CD4-positive, alpha-beta T cell (primary cell): ENCODE measurements at regions of chr15 and their contacts with region 1.

Region 1: DNA sequence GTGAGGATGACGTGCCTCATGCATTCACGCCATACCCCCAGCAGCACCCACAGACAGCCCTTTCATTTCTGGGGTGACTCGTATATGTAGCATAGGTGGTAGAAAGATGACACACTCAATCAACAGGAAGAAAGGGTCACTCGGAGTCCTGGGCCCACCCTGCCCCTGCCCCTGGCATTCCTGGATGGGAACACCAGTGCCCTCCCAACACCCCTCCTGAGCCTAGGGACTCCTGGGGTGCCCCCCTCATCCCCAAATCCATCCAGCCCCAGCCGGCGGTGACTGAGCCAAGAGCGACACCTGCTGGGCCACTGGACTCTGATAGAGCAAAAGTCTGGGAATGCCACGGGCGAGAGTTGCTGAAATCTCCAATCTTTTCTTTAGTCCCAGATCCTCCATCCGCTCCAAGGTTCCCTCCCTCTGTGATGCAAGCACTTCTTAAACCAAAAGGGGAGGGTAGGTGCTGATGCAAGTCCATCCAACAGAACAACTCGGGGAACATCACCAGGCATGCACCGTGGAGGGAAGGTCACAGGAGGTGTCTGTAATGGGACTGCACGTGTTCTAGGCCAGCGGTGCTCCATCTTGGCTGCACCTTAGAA is 31.1 kb downstream of the ACAN start:
- DNase-seq: peak in 11 of 14 experiments; percentile 5 to 45 (median 23)
- ATAC-seq: no peak
- H3K4me3 ChIP-seq: no peak overlapping the region
- H3K4me3 Mint-ChIP-seq: no peak overlapping the region
- H3K27ac ChIP-seq: no peak overlapping the region
- H3K27ac Mint-ChIP-seq: no peak overlapping the region
- H3K4me1 ChIP-seq: peaks cover 5% of the 10 kb centered on the region
- H3K4me1 Mint-ChIP-seq: no peaks in the 10 kb centered on the region
- H3K27me3 ChIP-seq: no peaks in the 10 kb centered on the region
- H3K27me3 Mint-ChIP-seq: peaks cover 3% of the 10 kb centered on the region
- CTCF ChIP-seq: no peak

Region 2: DNA sequence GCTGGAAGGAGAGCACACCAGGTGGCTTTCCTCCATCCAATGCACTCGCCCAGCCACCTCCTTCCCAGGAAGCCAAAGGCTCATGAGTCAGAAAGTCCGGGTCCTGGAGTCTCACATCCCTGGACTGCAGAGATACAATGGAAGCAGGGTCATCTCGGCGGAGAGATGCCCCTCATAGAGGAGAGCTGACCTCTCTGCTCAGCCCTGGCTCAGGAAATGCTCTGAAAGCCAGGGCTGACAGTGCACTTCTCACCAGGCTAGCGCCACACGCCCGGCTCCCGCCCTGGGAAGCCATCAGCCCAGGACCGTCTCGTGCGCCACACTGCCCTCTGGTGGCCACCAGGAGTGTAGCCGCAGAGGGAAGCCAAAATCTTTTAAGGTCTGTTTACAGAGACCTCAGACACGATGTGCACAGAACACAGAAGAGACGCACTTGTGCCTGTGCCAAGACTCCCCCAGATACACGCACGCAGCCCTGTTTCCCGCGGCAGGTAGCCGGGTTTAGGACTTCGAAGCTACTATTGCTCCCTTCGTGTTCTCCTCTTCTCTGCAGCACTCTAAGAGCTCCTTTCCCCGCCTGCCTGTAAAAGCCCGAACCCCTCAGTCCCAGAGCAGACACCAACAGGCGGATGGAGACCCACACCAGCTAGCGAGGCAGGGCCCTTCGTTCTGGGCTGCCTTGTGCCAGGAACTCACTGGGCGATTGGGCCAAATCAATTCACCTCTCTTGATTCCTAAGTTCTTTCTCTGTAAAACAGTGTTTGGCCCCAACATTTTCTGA is 587.5 kb before region 1 on chr15:
- CTCF ChIA-PET with region 1: no interaction called
- POLR2A ChIA-PET with region 1: no interaction called
- intact Hi-C with region 1: loop called in 1 of 2 experiments (anchors 5 kb)
- DNase-seq: peak; percentile 42 to 83 (median 64)
- ATAC-seq: peak; percentile 90
- H3K4me3 ChIP-seq: no peak overlapping the region
- H3K4me3 Mint-ChIP-seq: no peak overlapping the region
- H3K27ac ChIP-seq: no peak overlapping the region
- H3K27ac Mint-ChIP-seq: no peak overlapping the region
- H3K4me1 ChIP-seq: peaks cover 7% of the 10 kb centered on the region
- H3K4me1 Mint-ChIP-seq: peaks cover 8% of the 10 kb centered on the region
- H3K27me3 ChIP-seq: peaks cover 0 to 5% of the 10 kb centered on the region in 2 experiments
- H3K27me3 Mint-ChIP-seq: peaks cover 18% of the 10 kb centered on the region
- CTCF ChIP-seq: peak; percentile 88

Region 3: GRCh38 chr15:88476635-88477060 is 357.7 kb before region 1 on chr15:
- CTCF ChIA-PET with region 1: no interaction called
- POLR2A ChIA-PET with region 1: no interaction called
- intact Hi-C with region 1: loop called in 1 of 2 experiments (anchors 10 kb)
- DNase-seq: peak in 5 of 14 experiments; percentile 4 to 53 (median 43)
- ATAC-seq: peak; percentile 52
- H3K4me3 ChIP-seq: no peak overlapping the region
- H3K4me3 Mint-ChIP-seq: no peak overlapping the region
- H3K27ac ChIP-seq: no peak overlapping the region
- H3K27ac Mint-ChIP-seq: no peak overlapping the region
- H3K4me1 ChIP-seq: no peaks in the 10 kb centered on the region
- H3K4me1 Mint-ChIP-seq: peaks cover 6% of the 10 kb centered on the region
- H3K27me3 ChIP-seq: no peaks in the 10 kb centered on the region
- H3K27me3 Mint-ChIP-seq: no peaks in the 10 kb centered on the region
- CTCF ChIP-seq: peak; percentile 47